Sigmoid colon (tissue), 7 donors: ENCODE measurements at regions of chr10 and their contacts with region 1.

Region 1: DNA sequence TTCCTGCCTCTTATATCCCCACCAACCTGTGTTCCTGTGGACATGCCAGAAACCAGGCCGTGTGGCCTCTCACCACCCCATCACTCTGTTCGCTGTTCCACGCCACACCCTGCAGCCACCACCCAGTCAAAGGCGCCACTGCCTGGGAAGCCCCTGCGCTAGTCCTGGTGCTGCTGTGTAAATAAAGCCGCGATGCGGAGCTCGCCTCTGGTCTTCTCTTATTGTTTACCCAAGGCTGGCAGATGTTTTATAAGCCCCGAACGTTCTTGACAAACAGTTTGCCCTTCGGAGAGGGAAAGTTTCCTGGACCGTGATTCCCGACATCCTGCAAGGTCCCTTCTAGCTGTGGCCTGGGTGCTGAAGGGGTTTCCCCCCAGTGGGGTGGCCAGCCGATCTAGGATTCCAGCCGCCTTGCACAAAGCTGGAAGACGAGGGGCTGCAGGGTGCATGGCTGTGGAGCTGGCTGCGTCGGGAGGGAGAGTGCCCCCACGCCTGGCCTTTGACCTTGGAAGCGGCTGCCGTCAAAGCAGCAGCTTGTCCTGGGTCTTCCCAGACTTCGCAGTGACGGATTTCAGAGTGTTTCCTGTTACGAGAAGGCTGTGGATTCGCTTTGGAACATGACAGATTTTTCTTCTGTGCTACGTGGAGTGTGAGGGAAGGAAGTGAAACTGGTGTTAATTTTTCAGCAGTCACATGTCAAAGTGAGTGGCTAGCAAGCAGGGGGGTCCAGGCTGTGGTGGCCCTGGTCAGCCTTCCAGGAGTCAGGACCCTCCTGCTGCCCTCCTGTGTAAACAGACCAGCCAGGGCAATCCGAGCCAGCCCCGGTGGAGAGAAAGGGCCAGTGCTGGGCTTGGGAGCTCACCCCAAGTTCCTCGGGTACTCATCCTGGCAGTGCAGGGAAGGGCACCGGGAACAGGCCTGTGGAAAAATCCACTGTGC is 61.6 kb downstream of the LHPP start:
- DNase-seq: peak; percentile 71
- H3K4me3 ChIP-seq: peak overlapping the region in 3 of 4 donors; percentile 3 to 15 (median 10)
- H3K27ac ChIP-seq: peak overlapping the region; percentile 23 to 92 (median 84)
- H3K4me1 ChIP-seq: peaks cover 0 to 59% (median 42%) of the 10 kb centered on the region in 4 donors
- H3K27me3 ChIP-seq: no peaks in the 10 kb centered on the region
- CTCF ChIP-seq: no peak
- EP300 ChIP-seq: peak in 1 of 4 donors; percentile 16
- POLR2A ChIP-seq: no peak

Region 2: GRCh38 chr10:123994417-123995081 is 528.7 kb before region 1 on chr10:
- intact Hi-C with region 1: loop called (anchors 10 kb)
- DNase-seq: peak; percentile 93
- H3K4me3 ChIP-seq: peak overlapping the region in 3 of 4 donors; percentile 21 to 35 (median 22)
- H3K27ac ChIP-seq: peak overlapping the region in 3 of 4 donors; percentile 60 to 71 (median 69)
- H3K4me1 ChIP-seq: peaks cover 0 to 31% (median 26%) of the 10 kb centered on the region in 4 donors
- H3K27me3 ChIP-seq: peaks cover 13 to 39% (median 18%) of the 10 kb centered on the region in 3 donors
- CTCF ChIP-seq: peak; percentile 96 to 100 (median 99)
- EP300 ChIP-seq: no peak
- POLR2A ChIP-seq: no peak

Region 3: GRCh38 chr10:124106241-124106879 is 416.8 kb before region 1 on chr10:
- intact Hi-C with region 1: loop called (anchors 10 kb)
- DNase-seq: peak; percentile 93
- H3K4me3 ChIP-seq: peak overlapping the region in 1 of 4 donors; percentile 2
- H3K27ac ChIP-seq: peak overlapping the region; percentile 82 to 84 (median 83)
- H3K4me1 ChIP-seq: peaks cover 0 to 37% (median 34%) of the 10 kb centered on the region in 4 donors
- H3K27me3 ChIP-seq: no peaks in the 10 kb centered on the region
- CTCF ChIP-seq: no peak
- EP300 ChIP-seq: no peak
- POLR2A ChIP-seq: no peak

Region 4: DNA sequence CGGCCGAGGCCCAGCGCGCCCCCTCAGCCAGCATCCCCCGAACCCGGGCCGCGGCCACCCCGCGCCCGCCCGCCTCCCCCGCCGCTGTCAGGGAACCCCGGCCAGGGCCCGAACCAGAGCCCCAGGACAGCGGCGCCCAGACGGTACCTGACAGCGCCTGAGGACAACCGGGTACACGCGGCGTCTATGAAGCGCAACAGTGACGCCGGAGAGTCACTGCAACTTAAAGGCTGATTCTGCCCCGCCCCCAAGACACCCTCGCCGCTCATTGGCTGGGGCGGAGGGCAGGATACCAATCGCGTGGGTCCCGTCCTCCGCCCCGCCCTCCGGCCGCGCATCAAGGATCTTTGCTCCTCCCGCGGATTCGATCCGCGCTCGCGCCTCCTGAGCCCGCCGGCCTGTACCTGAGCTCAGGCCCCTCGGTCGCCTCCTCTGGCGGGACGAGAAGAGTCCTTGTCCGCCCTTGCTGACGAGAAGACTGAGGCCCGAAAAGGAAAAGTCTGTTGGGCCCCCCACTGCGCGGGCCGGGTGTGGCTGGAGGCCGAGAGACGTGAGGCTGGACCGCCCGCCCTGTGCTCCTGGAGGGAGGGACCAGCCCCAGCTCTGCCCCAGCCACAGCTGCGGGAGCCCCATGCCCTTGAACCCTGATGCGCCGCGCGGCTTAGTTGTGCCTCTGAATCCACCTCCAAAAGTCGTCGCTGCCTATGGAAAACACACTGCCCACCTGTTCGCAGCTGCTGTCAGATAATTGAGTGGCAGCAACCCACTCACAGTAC is 104.3 kb before region 1 on chr10 and contains the start of gene OAT:
- intact Hi-C with region 1: loop called (anchors 2 kb)
- DNase-seq: peak; percentile 99
- H3K4me3 ChIP-seq: peak within 1 kb of the TSS; percentile 87 to 100 (median 100)
- H3K27ac ChIP-seq: peak within 1 kb of the TSS; percentile 98 to 100 (median 100)
- H3K4me1 ChIP-seq: peaks cover 0 to 45% (median 40%) of the 10 kb centered on the region in 4 donors
- H3K27me3 ChIP-seq: no peaks in the 10 kb centered on the region
- CTCF ChIP-seq: no peak
- EP300 ChIP-seq: no peak
- POLR2A ChIP-seq: peak; percentile 94 to 98
- total RNA-seq, gene OAT: 117 to 147 (median 131) TPM

Region 5: GRCh38 chr10:124461438-124462347 is 61.5 kb before region 1 on chr10 and contains the start of gene LHPP:
- intact Hi-C with region 1: loop called (anchors 5 kb)
- DNase-seq: peak; percentile 89
- H3K4me3 ChIP-seq: peak within 1 kb of the TSS; percentile 49 to 82 (median 76)
- H3K27ac ChIP-seq: peak within 1 kb of the TSS; percentile 88 to 94 (median 88)
- H3K4me1 ChIP-seq: peaks cover 0 to 17% (median 10%) of the 10 kb centered on the region in 4 donors
- H3K27me3 ChIP-seq: no peaks in the 10 kb centered on the region
- CTCF ChIP-seq: peak in 2 of 4 experiments; percentile 9 to 58
- EP300 ChIP-seq: no peak
- POLR2A ChIP-seq: no peak
- total RNA-seq, gene LHPP: 17.5 to 35.7 (median 24.9) TPM